AG04450 (cell line): ENCODE measurements at regions of chr9 and their contacts with region 1.

Region 1: GRCh38 chr9:76302947-76303940 is 91.0 kb downstream of the RFK start:
- DNase-seq: peak; percentile 39
- H3K4me3 ChIP-seq: no peak overlapping the region
- H3K27ac ChIP-seq: no peak overlapping the region
- H3K27me3 ChIP-seq: no peaks in the 10 kb centered on the region
- CTCF ChIP-seq: peak; percentile 67

Region 2: DNA sequence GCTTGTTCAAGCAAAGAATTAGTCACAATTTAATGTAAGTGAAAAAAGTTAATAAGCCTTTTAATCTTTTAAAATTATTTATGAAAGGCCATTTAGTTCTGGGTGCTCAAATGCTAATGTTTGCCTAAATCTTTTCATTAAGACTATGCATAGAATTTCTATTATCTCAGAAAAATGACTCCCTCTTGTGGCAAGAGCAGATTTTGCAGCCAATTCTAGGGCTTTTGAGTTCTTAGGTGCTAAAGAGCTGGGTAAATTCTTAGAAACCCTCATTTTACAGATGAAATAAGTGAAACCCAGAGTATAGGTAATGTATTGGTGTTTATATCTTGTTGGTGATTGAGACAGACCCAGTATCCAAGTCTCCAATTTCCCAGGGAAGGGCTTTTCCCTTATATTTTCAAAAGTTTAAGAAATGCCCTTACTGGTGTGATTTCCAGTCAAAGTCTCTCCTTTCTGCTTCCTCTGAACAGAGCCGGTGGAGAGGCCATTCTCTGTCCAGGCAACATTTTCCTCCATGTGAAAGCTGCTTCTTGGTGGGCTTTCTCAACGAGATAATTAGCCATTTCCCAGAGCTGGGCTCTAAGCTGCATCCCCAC is 436.9 kb before region 1 on chr9:
- CTCF ChIA-PET with region 1: interaction called, 24 read pairs
- POLR2A ChIA-PET with region 1: no interaction called
- DNase-seq: no peak
- H3K4me3 ChIP-seq: no peak overlapping the region
- H3K27ac ChIP-seq: no peak overlapping the region
- H3K27me3 ChIP-seq: no peaks in the 10 kb centered on the region
- CTCF ChIP-seq: peak; percentile 75

Region 3: GRCh38 chr9:75906531-75906930 is 396.7 kb before region 1 on chr9:
- CTCF ChIA-PET with region 1: interaction called, 10 read pairs
- POLR2A ChIA-PET with region 1: no interaction called
- DNase-seq: no peak
- H3K4me3 ChIP-seq: no peak overlapping the region
- H3K27ac ChIP-seq: no peak overlapping the region
- H3K27me3 ChIP-seq: no peaks in the 10 kb centered on the region
- CTCF ChIP-seq: no peak

Region 4: DNA sequence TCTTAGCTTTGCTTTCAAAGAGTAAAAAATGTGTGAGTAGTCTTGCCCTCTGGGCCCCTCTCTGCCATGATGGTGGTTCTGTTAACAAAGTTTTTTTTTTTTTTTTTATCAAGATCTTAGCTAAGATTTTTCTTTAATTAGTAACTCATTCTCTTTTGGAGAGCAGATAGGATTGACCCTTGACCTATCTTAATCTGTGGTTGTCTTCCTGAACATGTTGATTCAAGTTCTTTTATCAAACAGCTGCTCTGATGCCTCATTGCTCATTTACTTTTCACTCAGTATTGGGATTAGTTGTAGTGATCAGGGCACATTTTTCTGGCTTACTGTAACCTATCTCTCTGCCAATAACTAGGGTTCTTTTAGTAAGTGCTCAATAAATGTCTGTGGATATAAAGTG is 306.5 kb before region 1 on chr9:
- CTCF ChIA-PET with region 1: interaction called, 10 read pairs
- POLR2A ChIA-PET with region 1: no interaction called
- DNase-seq: no peak
- H3K4me3 ChIP-seq: no peak overlapping the region
- H3K27ac ChIP-seq: no peak overlapping the region
- H3K27me3 ChIP-seq: no peaks in the 10 kb centered on the region
- CTCF ChIP-seq: no peak

Region 5: GRCh38 chr9:76135902-76136301 is 167.3 kb before region 1 on chr9:
- CTCF ChIA-PET with region 1: interaction called, 10 read pairs
- POLR2A ChIA-PET with region 1: interaction called, 3 read pairs
- DNase-seq: no peak
- H3K4me3 ChIP-seq: no peak overlapping the region
- H3K27ac ChIP-seq: no peak overlapping the region
- H3K27me3 ChIP-seq: no peaks in the 10 kb centered on the region
- CTCF ChIP-seq: no peak

Region 6: GRCh38 chr9:76321205-76321828 is 18.1 kb after region 1 on chr9:
- CTCF ChIA-PET with region 1: interaction called, 15 read pairs
- POLR2A ChIA-PET with region 1: no interaction called
- DNase-seq: peak; percentile 51
- H3K4me3 ChIP-seq: no peak overlapping the region
- H3K27ac ChIP-seq: peak overlapping the region; percentile 68
- H3K27me3 ChIP-seq: no peaks in the 10 kb centered on the region
- CTCF ChIP-seq: no peak